ENCODE measurements at regions of chr22 and their contacts with region 1.

Region 1: GRCh38 chr22:37643225-37643847 is 3.9 kb downstream of the SH3BP1 start:
- DNase-seq: peak; percentile 89 to 96 (median 95)
- ATAC-seq: peak; percentile 51
- H3K4me3 ChIP-seq: no peak overlapping the region
- H3K4me1 ChIP-seq: peaks cover 37% of the 10 kb centered on the region
- CTCF ChIP-seq: peak; percentile 92

Region 2: DNA sequence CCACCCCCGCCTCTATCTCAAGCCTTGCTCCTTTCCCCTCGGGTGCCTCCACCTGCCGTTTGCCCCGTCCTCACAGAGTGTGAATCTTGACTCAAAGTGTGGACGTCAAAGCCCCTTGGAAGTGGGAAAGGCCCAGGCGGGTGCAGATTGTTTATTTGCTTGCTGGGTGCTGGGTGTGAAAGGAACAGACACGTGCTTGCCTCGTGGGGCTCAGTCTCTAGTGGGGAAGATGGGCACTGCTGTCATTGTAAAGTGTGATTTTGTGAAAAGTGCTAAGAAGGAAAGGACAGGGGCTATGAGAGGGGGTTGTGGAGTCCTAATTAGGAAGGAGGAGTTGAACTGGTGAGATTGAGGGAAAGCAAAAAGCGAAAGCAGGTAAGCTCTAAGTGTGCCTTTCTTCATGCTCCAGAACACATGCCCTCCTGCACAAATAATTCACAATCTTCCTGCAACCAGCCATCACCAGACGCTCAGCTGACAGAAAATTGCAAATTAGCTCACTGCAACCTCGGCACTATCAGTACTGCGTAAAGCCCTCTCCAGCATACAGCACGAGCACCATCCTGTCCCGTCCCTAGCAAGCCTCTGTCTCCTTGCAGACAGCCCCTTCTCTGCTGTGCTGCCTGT is 154.7 kb after region 1 on chr22:
- intact Hi-C with region 1: loop called in 1 of 2 experiments (anchors 10 kb)
- DNase-seq: no peak
- ATAC-seq: no peak
- H3K4me3 ChIP-seq: no peak overlapping the region
- H3K4me1 ChIP-seq: peaks cover 5% of the 10 kb centered on the region
- CTCF ChIP-seq: no peak

Measured in mucosa of descending colon (tissue), 3 donors.